ENCODE measurements at regions of chr6 and their contacts with region 1.

Region 1: GRCh38 chr6:139965393-139965792 is 590.9 kb upstream of the CITED2 start:
- H3K4me3 Mint-ChIP-seq: no peak overlapping the region
- H3K27ac Mint-ChIP-seq: no peak overlapping the region
- H3K4me1 Mint-ChIP-seq: peaks cover 21% of the 10 kb centered on the region
- H3K27me3 Mint-ChIP-seq: no peaks in the 10 kb centered on the region

Region 2: DNA sequence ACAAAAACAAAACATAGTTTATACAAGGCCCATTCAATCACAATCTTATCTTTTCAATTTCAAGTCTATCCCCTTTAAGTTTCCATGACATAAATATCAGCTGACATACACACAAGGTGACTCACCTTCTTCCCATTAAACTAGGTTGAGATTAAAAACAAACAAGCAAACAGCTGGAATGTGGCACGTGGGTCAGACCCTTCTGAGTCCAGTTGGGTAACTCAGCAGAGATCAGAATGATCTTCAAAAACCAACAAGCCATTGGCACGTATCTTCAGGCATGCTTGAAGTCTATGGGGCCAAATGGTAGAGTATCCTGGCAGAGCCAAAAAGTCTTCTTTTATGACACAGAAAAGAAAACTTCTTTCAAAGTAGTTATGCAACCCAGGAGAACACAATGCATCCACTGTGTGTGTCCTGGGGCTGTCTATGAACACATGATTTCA is 12.5 kb after region 1 on chr6:
- intact Hi-C with region 1: loop called (anchors 2 kb)
- H3K4me3 Mint-ChIP-seq: no peak overlapping the region
- H3K27ac Mint-ChIP-seq: no peak overlapping the region
- H3K4me1 Mint-ChIP-seq: peaks cover 30% of the 10 kb centered on the region
- H3K27me3 Mint-ChIP-seq: no peaks in the 10 kb centered on the region